Dendritic cell treated with granulocyte-macrophage colony-stimulating factor and Interleukin-4, amounts not matched to agents 40 ng/mL and 50 ng/mL, for 4 days (primary cell): ENCODE measurements at regions of chr4 and their contacts with region 1.

Region 1: GRCh38 chr4:157787618-157788017 is 385.2 kb downstream of the GASK1B start:
- H3K4me3 Mint-ChIP-seq: no peak overlapping the region
- H3K27ac Mint-ChIP-seq: no peak overlapping the region
- H3K4me1 Mint-ChIP-seq: no peaks in the 10 kb centered on the region
- H3K27me3 Mint-ChIP-seq: no peaks in the 10 kb centered on the region

Region 2: DNA sequence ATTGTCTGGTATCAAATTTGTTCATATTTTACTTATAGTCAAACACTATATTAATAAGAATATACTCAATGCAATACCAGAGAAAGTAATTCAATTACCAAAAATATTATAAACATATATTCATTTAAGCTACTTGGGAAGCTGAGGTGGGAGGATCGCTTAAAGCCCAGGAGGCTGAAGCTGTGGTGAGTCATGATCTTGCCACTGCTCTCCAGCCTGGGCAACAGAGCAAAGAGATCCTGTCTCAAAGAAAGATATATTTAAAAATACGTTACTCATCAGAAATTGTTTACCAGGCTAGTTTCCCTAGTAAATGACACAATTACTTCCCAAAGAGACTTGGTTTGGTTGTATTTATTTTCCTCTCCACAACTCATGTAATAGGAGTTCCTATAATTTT is 48.4 kb before region 1 on chr4:
- intact Hi-C with region 1: no loop called
- H3K4me3 Mint-ChIP-seq: no peak overlapping the region
- H3K27ac Mint-ChIP-seq: no peak overlapping the region
- H3K4me1 Mint-ChIP-seq: no peaks in the 10 kb centered on the region
- H3K27me3 Mint-ChIP-seq: no peaks in the 10 kb centered on the region

Region 3: DNA sequence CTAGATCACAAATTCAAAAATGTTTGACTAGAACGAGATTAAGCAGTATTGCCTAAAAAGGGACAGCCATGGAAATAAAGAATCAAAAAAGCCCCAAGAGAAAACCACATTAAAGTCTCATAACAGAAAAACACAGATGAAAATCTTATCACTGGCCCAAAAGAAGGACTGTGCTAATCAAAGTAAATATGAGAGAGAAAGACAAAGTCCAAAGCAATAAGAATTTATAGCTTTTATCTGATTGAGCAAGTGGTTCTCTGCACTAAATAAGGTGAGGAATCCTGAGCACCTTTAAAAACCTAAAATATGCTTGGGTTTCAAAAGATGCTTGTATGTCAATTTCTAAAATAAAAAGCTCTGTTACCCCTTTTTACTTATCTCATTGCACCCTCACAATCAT is 24.1 kb before region 1 on chr4:
- intact Hi-C with region 1: no loop called
- H3K4me3 Mint-ChIP-seq: no peak overlapping the region
- H3K27ac Mint-ChIP-seq: no peak overlapping the region
- H3K4me1 Mint-ChIP-seq: no peaks in the 10 kb centered on the region
- H3K27me3 Mint-ChIP-seq: no peaks in the 10 kb centered on the region

Region 4: DNA sequence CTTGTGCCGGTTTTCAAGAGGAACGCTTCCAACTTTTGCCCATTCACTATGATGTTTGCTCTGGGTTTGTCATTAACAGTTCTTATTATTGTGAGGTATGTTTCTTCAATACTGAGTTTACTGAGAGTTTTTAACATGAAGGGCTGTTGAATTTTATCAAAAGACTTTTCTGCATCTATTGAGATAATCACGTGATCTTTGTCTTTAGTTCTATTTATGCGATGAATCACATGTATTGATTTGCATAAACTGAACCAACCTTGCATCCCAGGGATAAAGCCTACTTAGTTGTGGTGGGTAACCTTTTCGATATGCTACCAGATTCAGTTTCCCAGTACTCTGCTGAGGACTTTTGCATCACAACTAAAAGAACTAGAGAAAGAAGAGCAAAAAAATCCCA is 67.2 kb after region 1 on chr4:
- intact Hi-C with region 1: loop called (anchors 2 kb)
- H3K4me3 Mint-ChIP-seq: no peak overlapping the region
- H3K27ac Mint-ChIP-seq: no peak overlapping the region
- H3K4me1 Mint-ChIP-seq: no peaks in the 10 kb centered on the region
- H3K27me3 Mint-ChIP-seq: no peaks in the 10 kb centered on the region